HCT116 (cell line): ENCODE measurements at regions of chr4 and their contacts with region 1.

Region 1: DNA sequence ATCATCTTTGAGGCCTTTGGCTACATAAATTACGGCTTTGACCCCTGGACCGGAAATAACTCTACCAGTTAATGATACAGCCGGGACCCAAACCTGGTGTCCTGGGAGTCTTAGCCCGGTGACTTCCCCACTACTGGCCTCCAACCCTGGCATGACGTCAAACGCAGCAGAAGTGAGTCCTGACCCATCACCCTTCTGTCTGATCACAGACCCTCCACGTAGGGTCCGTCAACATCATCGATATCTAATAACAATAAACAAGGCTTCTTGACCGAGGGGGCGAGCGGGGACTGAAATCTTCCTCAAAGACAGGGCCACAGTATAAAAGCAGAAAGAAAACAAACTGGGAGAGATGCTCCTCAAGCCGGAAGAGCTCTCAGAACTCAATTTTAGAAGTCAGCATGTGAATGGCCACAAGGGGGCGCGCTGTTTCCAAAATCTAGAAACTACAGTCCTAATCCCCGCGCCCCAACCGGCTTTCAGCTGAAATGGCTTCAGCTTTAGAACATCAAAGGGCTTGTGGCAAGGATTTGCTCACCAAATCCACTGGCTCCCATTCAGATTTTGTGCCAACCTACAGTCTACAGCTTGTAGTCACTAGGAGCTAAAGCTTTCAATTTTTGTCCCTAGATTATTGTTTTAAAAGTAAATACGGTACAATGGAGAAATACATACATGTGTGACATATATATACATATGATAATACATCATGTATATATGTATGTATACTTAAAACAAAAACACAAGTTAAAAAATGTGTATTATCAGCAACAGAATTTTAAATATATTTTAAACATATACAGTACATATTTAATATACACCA is 46.4 kb upstream of the ENPP6 start:
- DNase-seq: peak; percentile 73
- ATAC-seq: peak; percentile 65
- H3K4me3 ChIP-seq: no peak overlapping the region
- H3K27ac ChIP-seq: no peak overlapping the region
- H3K4me1 ChIP-seq: peaks cover 0 to 27% of the 10 kb centered on the region in 2 experiments; a peak in 1 of 4 replicates
- H3K27me3 ChIP-seq: no peaks in the 10 kb centered on the region
- CTCF ChIP-seq: peak; percentile 45 to 78 (median 65)
- POLR2A ChIP-seq: no peak
- RAD21 ChIP-seq: peak; percentile 80

Region 2: DNA sequence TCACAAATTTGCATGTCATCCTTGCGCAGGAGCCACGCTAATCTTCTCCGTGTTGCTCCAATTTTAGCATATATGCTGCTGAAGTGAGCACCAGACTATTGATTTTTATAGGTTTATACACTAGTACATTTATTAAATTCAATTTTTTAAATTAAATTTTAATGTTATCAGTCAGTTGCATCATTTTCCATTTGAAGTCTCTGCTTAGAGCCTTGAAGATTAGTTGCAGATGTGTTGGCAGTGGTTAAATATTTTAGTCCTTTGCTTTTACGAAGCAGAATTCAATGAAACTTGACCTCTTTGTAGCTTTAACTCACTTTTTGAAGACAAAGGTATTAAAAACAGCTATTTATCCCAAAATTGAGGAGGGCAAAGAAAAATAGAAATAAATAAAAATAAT is 588.5 kb before region 1 on chr4:
- CTCF ChIA-PET with region 1: no interaction called
- POLR2A ChIA-PET with region 1: no interaction called
- RAD21 ChIA-PET with region 1: no interaction called
- intact Hi-C with region 1: no loop called
- DNase-seq: no peak
- ATAC-seq: no peak
- H3K4me3 ChIP-seq: no peak overlapping the region
- H3K27ac ChIP-seq: no peak overlapping the region
- H3K4me1 ChIP-seq: no peaks in the 10 kb centered on the region
- H3K27me3 ChIP-seq: no peaks in the 10 kb centered on the region
- CTCF ChIP-seq: no peak
- POLR2A ChIP-seq: no peak
- RAD21 ChIP-seq: no peak

Region 3: DNA sequence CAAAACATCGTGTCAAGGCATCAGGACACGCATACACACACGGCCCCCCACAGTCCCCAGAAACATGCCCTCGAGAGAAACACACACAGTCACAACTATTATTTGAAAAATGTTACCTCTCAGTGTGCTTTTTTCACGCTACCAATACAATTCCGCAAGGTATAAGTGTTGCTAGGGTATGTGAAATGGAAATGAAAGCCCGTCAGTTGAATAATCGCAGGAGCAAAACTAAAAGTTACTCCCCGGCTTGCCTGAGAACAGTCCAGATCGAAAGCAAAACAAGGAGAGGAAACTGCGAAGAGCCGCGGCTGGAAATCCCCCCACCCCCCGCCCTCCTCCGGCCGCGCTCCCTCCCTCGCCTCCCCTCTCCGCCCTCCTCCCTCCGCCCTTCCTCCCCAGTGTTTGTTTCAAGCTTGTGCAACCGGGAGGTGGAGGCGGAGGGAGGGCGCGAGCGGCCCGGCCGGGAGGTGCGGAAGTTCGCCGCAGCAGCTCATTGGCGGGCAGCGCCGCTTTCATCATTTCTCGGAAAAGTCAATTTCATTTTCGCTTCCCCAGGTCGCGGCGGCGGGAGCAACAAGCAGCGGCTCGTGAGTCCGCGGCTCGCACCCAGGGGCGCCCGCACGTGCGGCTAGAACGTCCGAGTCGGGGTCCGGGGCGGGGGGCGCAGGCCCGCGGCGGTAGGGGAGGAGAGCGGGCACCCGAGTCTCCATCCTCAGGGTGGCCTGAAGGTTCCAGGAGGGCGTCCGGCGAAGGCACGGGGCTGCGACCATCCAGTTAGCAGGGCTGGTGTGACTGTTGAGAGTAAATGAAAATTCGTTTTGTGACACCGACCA is 210.4 kb after region 1 on chr4 and contains the start of gene IRF2:
- CTCF ChIA-PET with region 1: no interaction called
- POLR2A ChIA-PET with region 1: interaction called, 3 read pairs
- RAD21 ChIA-PET with region 1: interaction called in 1 of 2 experiments, 4 read pairs
- intact Hi-C with region 1: loop called (anchors 2 kb)
- DNase-seq: peak; percentile 71
- ATAC-seq: peak; percentile 70
- H3K4me3 ChIP-seq: peak within 1 kb of the TSS; percentile 63 to 68
- H3K27ac ChIP-seq: peak within 1 kb of the TSS; percentile 75
- H3K4me1 ChIP-seq: peaks cover 0 to 13% of the 10 kb centered on the region in 2 experiments; a peak in 2 of 4 replicates
- H3K27me3 ChIP-seq: no peaks in the 10 kb centered on the region
- CTCF ChIP-seq: no peak
- POLR2A ChIP-seq: no peak
- RAD21 ChIP-seq: no peak
- total RNA-seq, gene IRF2: 10.6 TPM

Region 4: DNA sequence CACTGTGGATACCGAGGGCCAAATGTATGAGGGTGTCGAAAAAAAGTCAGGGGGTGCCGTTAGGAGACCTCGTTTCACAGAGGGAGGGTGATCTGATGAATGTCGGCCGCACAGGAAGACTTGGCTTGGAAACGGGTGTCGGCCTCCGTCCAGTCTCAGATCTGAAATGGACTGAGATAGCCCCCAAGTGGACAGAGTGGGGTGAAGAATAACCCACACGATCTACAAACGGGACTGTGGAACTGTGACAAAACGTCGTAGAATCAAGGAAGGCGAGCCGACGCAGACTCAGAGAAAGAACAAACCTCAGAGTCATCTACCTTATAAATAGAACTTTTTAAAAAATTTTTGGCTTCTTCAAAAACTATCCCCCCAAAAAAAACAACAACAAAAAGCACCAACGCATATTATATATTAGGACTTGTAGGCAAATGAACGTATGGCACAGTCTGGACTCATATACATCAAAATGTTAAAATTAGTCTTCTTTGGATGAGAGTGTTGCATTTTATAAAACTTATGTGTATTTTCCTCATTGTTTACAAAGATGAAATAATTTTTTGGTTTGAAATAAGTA is 274.0 kb after region 1 on chr4:
- CTCF ChIA-PET with region 1: interaction called, 13 read pairs
- POLR2A ChIA-PET with region 1: no interaction called
- RAD21 ChIA-PET with region 1: interaction called in 1 of 2 experiments, 3 read pairs
- intact Hi-C with region 1: loop called (anchors 1 kb)
- DNase-seq: peak; percentile 66
- ATAC-seq: peak; percentile 85
- H3K4me3 ChIP-seq: peak overlapping the region; percentile 51 to 74
- H3K27ac ChIP-seq: peak overlapping the region; percentile 61
- H3K4me1 ChIP-seq: peaks cover 0 to 5% of the 10 kb centered on the region in 2 experiments; a peak in 1 of 4 replicates
- H3K27me3 ChIP-seq: no peaks in the 10 kb centered on the region
- CTCF ChIP-seq: peak; percentile 43 to 64 (median 47); a peak in 4 of 6 replicates
- POLR2A ChIP-seq: no peak
- RAD21 ChIP-seq: peak; percentile 87

Region 5: DNA sequence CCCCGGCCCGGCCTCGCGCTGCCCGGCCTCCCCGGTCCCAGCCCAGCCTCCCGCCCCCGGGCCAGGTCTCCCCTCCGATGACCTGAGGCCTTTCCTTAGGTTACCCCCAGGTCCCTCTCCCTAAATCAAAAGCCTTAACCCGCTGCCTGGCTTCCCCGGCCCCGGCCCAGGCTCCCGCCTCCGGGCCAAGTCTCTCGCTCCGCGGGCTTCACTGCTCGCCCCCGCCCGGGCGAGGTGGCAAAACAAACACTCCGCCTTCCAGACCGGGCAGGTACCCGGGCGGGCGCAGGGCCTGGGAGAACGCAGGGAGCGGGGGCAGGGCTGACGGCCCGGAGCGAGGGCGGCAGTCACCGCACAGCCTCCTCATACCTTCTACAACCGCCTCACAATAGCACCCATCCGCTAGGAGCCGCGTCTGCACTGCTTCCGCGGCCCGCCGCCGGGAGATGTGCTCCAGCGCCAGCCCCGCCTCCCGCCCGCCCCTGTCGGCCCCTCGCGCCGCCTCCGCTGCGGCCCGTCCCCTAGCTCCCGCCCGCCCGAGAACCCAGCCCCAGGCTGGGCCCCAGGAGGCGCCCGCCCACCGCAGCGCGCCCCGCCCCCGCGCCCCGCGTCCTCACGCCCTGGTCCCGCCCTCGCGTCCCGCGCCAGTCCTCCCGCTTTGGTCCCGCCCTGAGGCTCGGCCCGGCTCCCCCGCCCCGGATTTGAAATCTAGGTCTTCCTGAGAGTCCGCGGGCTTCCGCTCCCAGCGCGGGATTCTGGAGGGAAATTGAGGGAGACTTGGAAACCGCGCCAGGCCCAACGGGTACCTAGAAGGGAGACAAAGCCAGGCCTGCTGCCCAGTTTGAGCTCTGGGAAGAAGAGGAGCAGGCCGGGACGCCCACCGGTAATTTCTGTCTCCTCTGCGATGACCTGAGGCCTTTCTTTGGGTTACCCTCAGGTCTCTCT is 385.2 kb after region 1 on chr4 and contains the starts of genes CASP3 and PRIMPOL:
- CTCF ChIA-PET with region 1: no interaction called
- POLR2A ChIA-PET with region 1: interaction called, 3 read pairs
- RAD21 ChIA-PET with region 1: no interaction called
- intact Hi-C with region 1: loop called (anchors 2 kb)
- DNase-seq: peak; percentile 59
- ATAC-seq: peak; percentile 93
- H3K4me3 ChIP-seq: peak within 1 kb of the TSS; percentile 71 to 78
- H3K27ac ChIP-seq: peak within 1 kb of the TSS; percentile 69
- H3K4me1 ChIP-seq: peaks cover 3 to 14% of the 10 kb centered on the region in 2 experiments; a peak in 2 of 4 replicates
- H3K27me3 ChIP-seq: no peaks in the 10 kb centered on the region
- CTCF ChIP-seq: no peak
- POLR2A ChIP-seq: peak; percentile 61
- RAD21 ChIP-seq: peak; percentile 33
- total RNA-seq, gene CASP3: 11.4 TPM
- total RNA-seq, gene PRIMPOL: 11.3 TPM

Region 6: DNA sequence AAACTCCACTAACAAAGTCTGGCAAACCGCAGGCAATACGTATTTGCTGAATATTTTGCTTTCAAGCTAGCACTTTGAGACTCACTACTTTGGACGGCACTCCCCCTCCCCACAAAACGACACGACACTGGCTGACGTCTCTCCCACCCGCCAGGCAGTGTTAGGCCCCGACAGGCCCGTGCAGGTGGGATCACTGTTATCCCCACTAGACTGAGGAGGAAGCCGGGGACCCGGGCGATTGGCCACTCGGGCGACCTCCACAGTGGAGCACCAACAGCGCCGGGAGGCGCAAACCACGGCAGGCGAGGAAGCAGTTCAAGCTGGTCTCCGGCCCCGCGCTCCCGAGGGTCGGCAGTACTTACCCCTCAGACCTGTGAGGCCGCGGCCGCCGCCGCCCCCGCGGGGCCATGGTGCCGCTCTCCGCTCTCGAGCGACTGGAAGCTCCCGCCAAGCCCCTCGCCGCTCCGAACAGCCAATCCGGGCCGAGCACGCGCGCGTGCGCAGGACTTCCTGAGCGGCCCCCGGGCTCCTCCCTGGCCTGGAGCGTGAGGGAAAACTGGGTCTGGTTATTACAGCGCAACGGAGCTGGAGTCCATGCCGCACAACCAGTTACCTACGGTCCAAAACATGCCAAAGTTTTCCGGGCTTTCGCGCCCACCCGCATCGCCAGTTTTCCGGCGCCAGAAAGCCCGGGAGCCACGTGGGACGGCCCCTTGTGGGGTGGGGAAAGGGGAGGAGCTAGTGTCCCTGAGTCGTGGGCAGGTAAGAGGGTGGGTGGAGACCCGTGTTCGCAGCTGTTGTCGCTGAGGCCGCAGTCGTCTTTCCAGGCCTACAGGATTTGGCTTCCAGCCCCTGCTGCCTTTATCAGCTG is 469.8 kb after region 1 on chr4 and contains the start of gene CENPU:
- CTCF ChIA-PET with region 1: no interaction called
- POLR2A ChIA-PET with region 1: no interaction called
- RAD21 ChIA-PET with region 1: no interaction called
- intact Hi-C with region 1: loop called (anchors 10 kb)
- DNase-seq: peak; percentile 91
- ATAC-seq: peak; percentile 92
- H3K4me3 ChIP-seq: peak within 1 kb of the TSS; percentile 77 to 81
- H3K27ac ChIP-seq: peak within 1 kb of the TSS; percentile 54
- H3K4me1 ChIP-seq: peaks cover 0 to 7% of the 10 kb centered on the region in 2 experiments; a peak in 2 of 4 replicates
- H3K27me3 ChIP-seq: no peaks in the 10 kb centered on the region
- CTCF ChIP-seq: no peak
- POLR2A ChIP-seq: no peak
- RAD21 ChIP-seq: no peak
- total RNA-seq, gene CENPU: 28.2 TPM

Region 7: DNA sequence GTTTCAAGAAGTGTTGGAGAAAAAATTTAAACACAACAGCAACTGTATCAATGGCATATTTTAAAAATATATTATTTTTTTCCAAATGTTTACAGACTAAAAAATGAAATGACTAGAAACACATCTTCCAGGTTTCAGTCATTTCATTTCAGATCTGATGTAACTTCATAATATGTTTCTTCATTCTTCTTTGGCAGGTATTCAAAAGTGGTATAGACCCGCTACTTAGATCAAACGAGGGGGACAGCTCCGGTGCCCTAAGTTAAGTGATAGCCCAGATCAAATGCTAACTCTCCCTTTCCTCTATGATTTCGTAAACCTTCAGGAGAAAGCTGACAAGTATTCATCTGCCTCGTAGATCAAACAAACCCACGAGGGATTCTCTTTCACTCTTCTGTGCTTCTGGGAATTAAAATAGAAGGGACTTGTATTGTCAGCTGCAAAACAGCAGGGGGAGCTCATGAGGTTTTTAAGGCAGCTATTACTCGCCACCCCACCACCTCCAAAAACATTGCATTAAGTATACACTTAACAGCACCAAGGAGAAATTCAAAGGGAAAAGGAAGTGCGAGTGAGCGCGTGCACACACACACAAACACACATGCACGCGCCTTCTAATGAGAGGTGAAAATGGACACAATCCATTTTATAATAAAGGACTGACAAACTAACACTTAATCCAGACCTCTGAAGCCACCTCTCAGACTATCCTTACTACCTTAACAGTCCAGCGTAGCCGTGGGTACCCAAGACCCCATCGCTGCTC is 775.6 kb after region 1 on chr4:
- CTCF ChIA-PET with region 1: no interaction called
- POLR2A ChIA-PET with region 1: no interaction called
- RAD21 ChIA-PET with region 1: no interaction called
- intact Hi-C with region 1: no loop called
- DNase-seq: peak; percentile 62
- ATAC-seq: peak; percentile 95
- H3K4me3 ChIP-seq: peak overlapping the region in 1 of 2 experiments; percentile 39; a peak in 3 of 4 replicates
- H3K27ac ChIP-seq: no peak overlapping the region
- H3K4me1 ChIP-seq: peaks cover 0 to 7% of the 10 kb centered on the region in 2 experiments; a peak in 1 of 4 replicates
- H3K27me3 ChIP-seq: no peaks in the 10 kb centered on the region
- CTCF ChIP-seq: peak; percentile 79 to 92 (median 80)
- POLR2A ChIP-seq: no peak
- RAD21 ChIP-seq: peak; percentile 90